Activated T-helper 2 cell treated with anti-CD3 and anti-CD28 coated beads, Interferon-gamma antibody, Interleukin-2, Interleukin-4, amounts not matched to agents 10 μg/mL and 5 μg/mL and 100 μg/mL, durations not matched to agents 14 hours and 24 hours and 36 hours (primary cell): ENCODE measurements at regions of chr17 and their contacts with region 1.

Region 1: GRCh38 chr17:17001874-17002520 is 30.1 kb upstream of the TNFRSF13B start:
- DNase-seq: peak; percentile 70
- H3K4me3 Mint-ChIP-seq: no peak overlapping the region
- H3K27ac Mint-ChIP-seq: no peak overlapping the region
- H3K4me1 Mint-ChIP-seq: no peaks in the 10 kb centered on the region
- H3K27me3 Mint-ChIP-seq: peaks cover 8% of the 10 kb centered on the region

Region 2: DNA sequence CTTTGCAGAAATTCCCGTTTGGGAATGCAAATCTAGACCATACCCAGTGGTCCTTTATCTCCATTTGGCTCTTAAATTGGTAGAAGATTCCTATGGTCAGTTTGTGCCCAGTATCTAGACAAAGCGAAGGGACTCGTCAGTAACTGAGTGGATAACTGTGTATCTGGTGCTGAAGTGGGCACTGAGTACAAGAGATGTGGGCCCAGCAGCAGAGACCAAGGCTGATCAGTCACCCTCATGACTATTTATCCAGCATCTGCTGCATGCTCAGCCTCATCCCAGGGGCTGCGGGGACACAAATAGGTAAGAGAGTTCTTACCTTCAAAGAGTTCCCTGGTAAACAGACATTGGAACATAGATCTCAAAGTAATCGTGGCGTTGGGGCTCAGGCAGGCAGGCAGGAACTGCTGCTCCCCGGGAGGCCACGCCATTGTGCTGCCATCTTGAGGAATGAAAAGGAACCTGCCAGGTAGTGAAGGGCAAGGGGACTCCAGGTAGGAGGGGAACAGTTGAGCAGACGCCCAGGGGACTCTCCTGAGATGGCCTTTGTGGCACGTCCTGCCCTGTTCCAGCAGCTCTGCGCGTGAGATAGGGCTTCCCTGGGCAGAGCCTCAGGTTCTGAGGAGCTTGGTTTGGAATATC is 311.5 kb after region 1 on chr17:
- intact Hi-C with region 1: loop called (anchors 5 kb)
- DNase-seq: peak; percentile 58
- H3K4me3 Mint-ChIP-seq: no peak overlapping the region
- H3K27ac Mint-ChIP-seq: no peak overlapping the region
- H3K4me1 Mint-ChIP-seq: peaks cover 3% of the 10 kb centered on the region
- H3K27me3 Mint-ChIP-seq: no peaks in the 10 kb centered on the region